SK-N-SH (cell line): ENCODE measurements at regions of chr7 and their contacts with region 1.

Region 1: GRCh38 chr7:90155206-90155605 is 937 bp downstream of the STEAP1 start:
- DNase-seq: no peak
- H3K4me3 ChIP-seq: peak overlapping the region in 1 of 2 experiments; percentile 73; a peak in 1 of 4 replicates
- H3K27ac ChIP-seq: peak overlapping the region in 1 of 2 experiments; percentile 89; a peak in 2 of 4 replicates
- H3K4me1 ChIP-seq: peaks cover 3 to 13% of the 10 kb centered on the region in 2 experiments
- H3K27me3 ChIP-seq: no peaks in the 10 kb centered on the region
- CTCF ChIP-seq: no peak
- EP300 ChIP-seq: no peak
- RAD21 ChIP-seq: no peak

Region 2: DNA sequence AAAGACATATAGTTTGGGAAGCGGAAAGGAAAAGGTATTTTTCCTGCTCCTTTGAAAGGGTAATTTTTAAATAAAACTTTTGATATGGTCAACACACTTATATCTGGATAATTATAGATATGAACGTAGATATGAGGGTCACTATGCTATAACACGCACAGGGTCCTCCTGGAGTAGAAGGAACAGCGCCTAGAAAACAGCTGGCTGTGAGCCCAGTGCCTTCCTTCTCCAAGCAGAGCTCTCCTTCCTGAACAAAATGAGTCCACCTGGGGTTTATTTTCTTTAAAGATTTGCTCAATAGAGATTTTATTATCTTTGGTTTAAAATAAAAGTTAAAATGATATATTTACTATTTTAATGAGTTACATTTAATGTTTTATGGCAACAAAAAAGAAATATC is 12.2 kb after region 1 on chr7:
- CTCF ChIA-PET with region 1: interaction called, 10 read pairs
- POLR2A ChIA-PET with region 1: no interaction called
- DNase-seq: no peak
- H3K4me3 ChIP-seq: no peak overlapping the region
- H3K27ac ChIP-seq: no peak overlapping the region
- H3K4me1 ChIP-seq: no peaks in the 10 kb centered on the region
- H3K27me3 ChIP-seq: no peaks in the 10 kb centered on the region
- CTCF ChIP-seq: no peak
- EP300 ChIP-seq: no peak
- RAD21 ChIP-seq: no peak

Region 3: GRCh38 chr7:90211391-90212148 is 56.4 kb after region 1 on chr7 and contains the start of gene STEAP2:
- CTCF ChIA-PET with region 1: interaction called, 13 read pairs
- POLR2A ChIA-PET with region 1: no interaction called
- DNase-seq: peak; percentile 96
- H3K4me3 ChIP-seq: peak within 1 kb of the TSS; percentile 90 to 97
- H3K27ac ChIP-seq: peak within 1 kb of the TSS; percentile 71 to 86
- H3K4me1 ChIP-seq: peaks cover 6 to 11% of the 10 kb centered on the region in 2 experiments; a peak in 2 of 4 replicates
- H3K27me3 ChIP-seq: no peaks in the 10 kb centered on the region
- CTCF ChIP-seq: peak; percentile 74
- EP300 ChIP-seq: peak; percentile 33 to 62; a peak in 1 of 4 replicates
- RAD21 ChIP-seq: peak; percentile 39
- polyA plus RNA-seq, gene STEAP2: 6.6 and 9.5 TPM in 2 replicates

Region 4: DNA sequence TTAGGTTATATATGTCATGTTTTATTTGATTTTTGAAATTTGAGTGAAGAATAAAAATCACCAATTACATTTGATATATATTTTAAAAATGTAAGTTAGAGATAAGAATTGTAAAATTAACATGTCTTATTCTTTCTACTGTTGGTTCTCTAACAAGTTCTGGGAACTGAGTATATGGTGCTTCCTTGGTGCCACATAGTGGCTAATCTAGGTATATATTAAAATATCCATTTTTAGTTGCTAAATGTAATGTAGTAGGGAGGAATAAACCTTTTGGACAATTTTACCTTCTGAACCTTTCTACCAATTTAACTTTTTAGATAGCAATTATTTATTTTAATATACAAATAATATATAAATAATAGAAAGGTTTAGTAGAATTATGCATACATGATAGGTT is 107.2 kb after region 1 on chr7:
- CTCF ChIA-PET with region 1: interaction called, 19 read pairs
- POLR2A ChIA-PET with region 1: no interaction called
- DNase-seq: peak; percentile 45
- H3K4me3 ChIP-seq: no peak overlapping the region
- H3K27ac ChIP-seq: no peak overlapping the region
- H3K4me1 ChIP-seq: peaks cover 0 to 12% of the 10 kb centered on the region in 2 experiments; a peak in 2 of 4 replicates
- H3K27me3 ChIP-seq: no peaks in the 10 kb centered on the region
- CTCF ChIP-seq: peak; percentile 78
- EP300 ChIP-seq: no peak
- RAD21 ChIP-seq: peak; percentile 83

Region 5: GRCh38 chr7:90412458-90413184 is 257.4 kb after region 1 on chr7:
- CTCF ChIA-PET with region 1: interaction called, 10 read pairs
- POLR2A ChIA-PET with region 1: interaction called, 7 read pairs
- DNase-seq: peak; percentile 30
- H3K4me3 ChIP-seq: no peak overlapping the region
- H3K27ac ChIP-seq: no peak overlapping the region; a peak in 1 of 4 replicates
- H3K4me1 ChIP-seq: peaks cover 5 to 6% of the 10 kb centered on the region in 2 experiments; a peak in 2 of 4 replicates
- H3K27me3 ChIP-seq: no peaks in the 10 kb centered on the region
- CTCF ChIP-seq: peak; percentile 49; the same call in 1 of the 2 replicates
- EP300 ChIP-seq: no peak
- RAD21 ChIP-seq: peak; percentile 65